ENCODE measurements at regions of chr5 and their contacts with region 1.

Region 1: DNA sequence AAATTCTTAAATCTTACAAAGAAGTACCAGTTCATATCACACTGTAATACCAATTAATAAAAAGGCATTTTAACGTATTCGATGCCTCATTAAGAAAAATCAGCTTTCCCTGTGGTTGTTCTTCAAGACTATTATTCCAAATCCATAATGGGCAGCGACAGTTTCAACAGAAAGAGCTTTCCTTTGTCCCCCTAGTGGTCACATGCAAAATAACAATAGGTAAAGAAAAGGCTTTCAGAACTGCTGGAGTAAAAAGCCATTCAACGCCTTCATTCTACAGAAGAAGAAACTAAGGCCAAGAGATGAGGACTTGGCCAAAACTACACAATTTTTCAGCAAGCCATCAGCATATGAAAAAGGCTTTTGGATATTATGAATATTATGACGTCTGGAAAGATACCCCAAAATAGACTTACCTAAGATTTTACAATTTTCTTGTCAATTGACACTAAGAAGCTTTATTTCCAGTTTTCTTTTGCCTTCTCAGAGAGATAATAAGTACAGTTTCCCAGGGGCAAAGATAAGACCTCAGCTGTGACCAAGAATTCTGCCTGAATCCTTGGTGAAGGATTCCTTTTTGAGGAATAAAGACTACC is 6.7 kb upstream of the CDH6 start:
- DNase-seq: no peak
- ATAC-seq: no peak

Region 2: DNA sequence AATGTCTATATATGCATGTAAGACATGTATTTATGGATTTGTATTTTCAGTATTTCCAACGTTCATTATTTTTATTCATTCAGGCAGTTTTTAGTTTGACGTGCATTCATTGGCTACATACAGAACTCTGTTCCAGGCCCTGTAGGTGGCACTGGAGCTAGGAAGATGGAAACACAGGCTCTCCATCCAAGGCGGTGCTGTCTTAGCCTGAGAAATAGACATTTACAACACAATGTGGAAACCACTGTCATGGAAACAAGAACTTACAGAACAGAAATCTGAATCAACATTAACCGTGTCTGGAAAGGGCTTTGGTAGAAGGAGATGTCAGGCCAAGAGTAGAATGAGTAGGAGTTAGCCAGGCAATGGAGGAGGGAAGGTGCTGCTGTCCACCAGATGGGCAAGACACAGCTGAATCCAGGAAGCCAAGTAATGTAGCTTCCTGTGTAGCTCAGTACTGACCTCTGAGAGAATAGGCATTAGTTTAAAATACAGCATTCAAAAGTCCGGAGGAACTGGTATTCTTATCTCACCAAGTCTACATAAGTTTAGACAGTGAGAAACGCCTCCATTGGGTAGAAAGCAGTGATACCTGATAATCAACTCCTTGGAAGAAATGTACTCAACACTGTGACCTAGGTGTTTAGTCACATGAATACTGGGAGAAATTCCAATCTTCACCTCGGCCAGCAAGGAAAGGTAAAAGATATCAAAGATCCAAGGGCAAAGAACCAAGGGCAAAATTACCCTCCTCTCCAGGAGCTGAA is 381.8 kb before region 1 on chr5:
- intact Hi-C with region 1: loop called (anchors 5 kb)
- DNase-seq: no peak
- ATAC-seq: peak; percentile 87

Region 3: DNA sequence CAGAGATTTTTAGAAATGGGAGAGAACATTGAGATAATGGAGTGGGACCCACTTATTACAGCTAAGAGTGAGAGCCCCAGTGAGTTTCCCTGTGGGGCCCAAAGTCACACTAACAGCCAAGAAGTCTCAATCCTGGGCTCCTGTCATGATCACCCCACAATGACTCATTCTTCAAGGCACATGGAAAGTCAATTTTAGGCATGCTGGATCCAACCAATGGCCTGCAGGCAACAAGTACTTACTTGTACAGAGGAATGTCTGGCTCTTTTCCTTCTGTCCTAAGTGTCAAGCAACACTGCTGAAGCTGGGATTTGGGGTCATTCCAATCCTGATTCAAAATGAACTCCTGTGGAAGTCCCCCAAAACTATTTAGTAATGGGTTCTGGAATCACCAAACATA is 222.0 kb after region 1 on chr5:
- intact Hi-C with region 1: no loop called
- DNase-seq: no peak
- ATAC-seq: peak; percentile 63